ENCODE measurements at regions of chr22 and their contacts with region 1.

Region 1: DNA sequence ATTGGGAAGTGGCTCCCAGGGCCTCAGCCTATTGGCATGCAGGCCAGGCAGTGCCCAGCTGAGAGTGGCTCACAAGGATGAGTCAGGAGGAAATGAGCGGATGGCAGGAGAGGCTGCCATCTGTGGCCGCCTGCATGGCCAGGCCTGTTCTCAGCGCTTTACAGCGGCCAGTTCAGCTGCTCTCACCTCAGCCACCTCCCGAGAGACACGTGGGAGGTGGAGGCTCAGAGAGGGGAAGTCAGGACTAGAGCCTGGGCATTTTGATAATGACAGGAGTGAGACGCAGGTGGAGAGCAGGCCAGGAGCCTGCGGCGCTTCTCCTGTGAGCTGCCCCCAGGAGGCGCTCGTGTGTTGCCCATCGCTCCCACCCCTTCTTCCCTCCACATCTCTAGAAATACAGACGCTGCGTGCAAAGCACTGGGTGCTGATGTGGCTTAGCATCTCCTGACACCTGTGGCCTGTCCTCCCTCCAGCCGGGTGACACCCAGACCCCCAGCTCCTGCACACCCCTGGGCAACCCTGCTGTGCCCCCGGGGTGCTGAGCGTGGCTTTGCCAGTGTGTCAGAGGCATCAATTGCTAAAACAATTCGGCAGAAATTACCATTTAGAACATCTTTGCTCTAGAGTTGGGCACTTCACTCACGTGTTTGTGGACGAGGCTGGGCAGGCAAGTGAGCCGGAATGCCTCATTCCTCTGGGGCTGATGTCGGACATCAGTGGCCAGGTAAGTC is 21.4 kb upstream of the PANX2 start:
- DNase-seq: peak; percentile 61 to 80 (median 70)
- ATAC-seq: peak; percentile 96
- H3K4me3 ChIP-seq: no peak overlapping the region
- H3K4me3 Mint-ChIP-seq: no peak overlapping the region
- H3K27ac ChIP-seq: no peak overlapping the region
- H3K27ac Mint-ChIP-seq: no peak overlapping the region
- H3K4me1 ChIP-seq: no peaks in the 10 kb centered on the region
- H3K4me1 Mint-ChIP-seq: peaks cover 0 to 4% (median 0%) of the 10 kb centered on the region in 7 donors
- H3K27me3 ChIP-seq: no peaks in the 10 kb centered on the region
- H3K27me3 Mint-ChIP-seq: peaks cover 0 to 6% (median 0%) of the 10 kb centered on the region in 5 donors

Region 2: DNA sequence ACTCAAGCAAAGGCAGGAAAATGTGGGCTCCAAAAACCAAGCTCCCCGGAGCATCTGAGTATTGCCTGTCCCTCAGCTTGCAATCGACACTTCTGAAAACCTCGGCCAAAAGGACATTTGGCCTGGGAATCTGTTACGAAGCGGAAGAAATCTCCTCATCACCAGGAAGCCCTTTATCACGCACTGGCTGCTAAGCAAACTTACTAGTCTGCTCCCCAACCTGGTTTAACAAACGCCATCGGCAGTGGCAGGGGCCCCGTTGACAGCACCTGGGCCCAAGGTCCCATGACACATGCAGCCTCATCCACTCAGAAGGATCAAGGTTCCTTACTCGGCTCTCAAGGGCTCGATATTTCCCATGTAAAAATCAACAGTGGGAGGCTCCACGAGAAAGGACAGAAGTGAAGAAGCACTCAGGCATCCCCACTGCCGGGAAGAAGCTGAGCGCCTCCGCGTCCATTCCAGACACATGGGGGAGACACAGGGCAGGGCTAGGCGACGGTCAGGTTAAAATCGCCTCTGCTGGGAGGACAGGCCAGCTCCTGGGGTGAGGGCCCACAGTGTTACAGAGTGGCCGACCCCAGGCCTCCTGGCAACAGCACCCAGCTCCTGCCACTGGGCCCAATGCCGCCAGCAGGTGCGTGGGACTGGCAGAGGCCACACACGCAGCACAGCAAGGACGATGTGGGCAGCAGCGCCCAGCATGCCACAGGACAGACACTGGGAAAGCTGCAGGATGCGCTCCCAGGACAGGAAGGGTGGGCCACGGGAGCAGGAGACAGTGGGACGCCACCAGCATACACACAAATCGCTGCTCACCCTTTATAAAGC is 348.5 kb before region 1 on chr22:
- CTCF ChIA-PET with region 1: no interaction called
- POLR2A ChIA-PET with region 1: no interaction called
- intact Hi-C with region 1: no loop called
- DNase-seq: no peak
- ATAC-seq: no peak
- H3K4me3 ChIP-seq: no peak overlapping the region
- H3K4me3 Mint-ChIP-seq: peak overlapping the region in 2 of 10 donors; percentile 25 to 46
- H3K27ac ChIP-seq: no peak overlapping the region
- H3K27ac Mint-ChIP-seq: peak overlapping the region in 5 of 9 donors; percentile 32 to 84 (median 67)
- H3K4me1 ChIP-seq: peaks cover 6 to 11% of the 10 kb centered on the region in 2 donors
- H3K4me1 Mint-ChIP-seq: peaks cover 13 to 48% (median 32%) of the 10 kb centered on the region in 7 donors
- H3K27me3 ChIP-seq: no peaks in the 10 kb centered on the region
- H3K27me3 Mint-ChIP-seq: no peaks in the 10 kb centered on the region

Region 3: DNA sequence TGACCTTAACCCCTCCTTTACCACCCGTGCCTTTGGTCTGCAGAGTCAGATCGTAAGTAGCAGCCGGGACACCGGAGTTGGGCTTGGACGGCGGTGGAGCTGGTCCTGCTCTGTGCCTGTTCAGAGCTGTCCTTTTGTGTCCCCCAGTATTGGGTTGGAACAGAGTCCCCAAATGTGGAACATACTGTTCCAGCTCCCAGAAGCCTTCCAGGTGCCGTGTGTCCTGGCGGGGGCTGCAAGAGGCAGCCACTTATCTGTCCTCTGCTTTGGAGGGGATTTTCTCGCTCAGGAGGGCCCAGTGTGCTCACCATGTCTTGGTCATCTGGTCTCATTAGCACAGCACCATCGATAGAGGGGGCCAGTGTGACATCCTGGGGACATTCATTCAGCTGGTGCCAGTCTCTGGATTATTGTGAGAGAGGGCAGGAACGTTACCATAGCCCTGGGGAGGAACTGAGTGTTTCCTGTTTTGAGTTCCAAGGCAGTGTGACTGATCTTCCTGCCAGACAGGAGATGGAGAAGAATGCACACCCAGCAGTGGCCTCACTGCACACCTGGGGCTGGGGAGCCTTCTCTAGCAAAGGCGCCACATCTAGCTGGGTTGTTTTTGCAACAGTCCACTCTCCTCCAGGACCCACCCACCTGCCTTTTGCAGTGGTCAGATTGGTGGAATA is 218.3 kb before region 1 on chr22:
- CTCF ChIA-PET with region 1: no interaction called
- POLR2A ChIA-PET with region 1: interaction called, 3 read pairs
- intact Hi-C with region 1: loop called in 1 of 2 experiments (anchors 2 kb)
- DNase-seq: peak in 7 of 9 donors; percentile 37 to 55 (median 44)
- ATAC-seq: peak; percentile 40
- H3K4me3 ChIP-seq: no peak overlapping the region
- H3K4me3 Mint-ChIP-seq: peak overlapping the region; percentile 34 to 83 (median 60)
- H3K27ac ChIP-seq: peak overlapping the region; percentile 37
- H3K27ac Mint-ChIP-seq: peak overlapping the region; percentile 79 to 92 (median 87)
- H3K4me1 ChIP-seq: peaks cover 10 to 28% of the 10 kb centered on the region in 2 donors
- H3K4me1 Mint-ChIP-seq: peaks cover 18 to 47% (median 39%) of the 10 kb centered on the region in 7 donors
- H3K27me3 ChIP-seq: no peaks in the 10 kb centered on the region
- H3K27me3 Mint-ChIP-seq: no peaks in the 10 kb centered on the region

Region 4: GRCh38 chr22:50190941-50191741 is 42.0 kb after region 1 on chr22:
- CTCF ChIA-PET with region 1: interaction called, 14 read pairs
- POLR2A ChIA-PET with region 1: interaction called, 4 read pairs
- intact Hi-C with region 1: loop called (anchors 1 kb)
- DNase-seq: peak in 7 of 9 donors; percentile 80 to 93 (median 90)
- ATAC-seq: peak; percentile 74
- H3K4me3 ChIP-seq: peak overlapping the region; percentile 56
- H3K4me3 Mint-ChIP-seq: peak overlapping the region; percentile 90 to 96 (median 92)
- H3K27ac ChIP-seq: peak overlapping the region; percentile 98
- H3K27ac Mint-ChIP-seq: peak overlapping the region; percentile 94 to 100 (median 99)
- H3K4me1 ChIP-seq: peaks cover 46% of the 10 kb centered on the region in 2 donors
- H3K4me1 Mint-ChIP-seq: peaks cover 25 to 51% (median 33%) of the 10 kb centered on the region in 7 donors
- H3K27me3 ChIP-seq: no peaks in the 10 kb centered on the region
- H3K27me3 Mint-ChIP-seq: no peaks in the 10 kb centered on the region

Region 5: DNA sequence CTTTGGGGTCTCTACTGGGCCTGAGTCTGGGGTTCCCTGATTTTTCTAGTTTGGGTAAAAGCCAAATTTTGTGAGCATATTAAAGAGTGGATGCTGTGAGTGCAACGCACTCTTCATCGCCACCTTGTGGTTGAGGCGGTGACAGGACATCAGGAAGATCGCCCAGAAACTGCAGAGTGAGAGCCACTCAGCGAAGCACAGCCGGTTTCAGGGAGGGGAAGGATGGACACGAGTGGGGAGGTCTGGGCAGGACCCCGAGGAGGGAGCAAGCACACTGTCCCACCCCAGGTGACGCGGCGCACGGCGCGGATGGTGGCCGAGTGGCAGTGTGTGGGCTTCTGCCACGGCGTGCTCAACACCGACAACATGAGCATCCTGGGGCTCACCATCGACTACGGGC is 60.7 kb after region 1 on chr22:
- CTCF ChIA-PET with region 1: interaction called, 13 read pairs
- POLR2A ChIA-PET with region 1: no interaction called
- intact Hi-C with region 1: loop called in 1 of 2 experiments (anchors 1 kb)
- DNase-seq: peak; percentile 50 to 78 (median 68)
- ATAC-seq: peak; percentile 83
- H3K4me3 ChIP-seq: no peak overlapping the region
- H3K4me3 Mint-ChIP-seq: peak overlapping the region in 1 of 10 donors; percentile 25
- H3K27ac ChIP-seq: no peak overlapping the region
- H3K27ac Mint-ChIP-seq: peak overlapping the region in 8 of 9 donors; percentile 58 to 96 (median 82)
- H3K4me1 ChIP-seq: no peaks in the 10 kb centered on the region
- H3K4me1 Mint-ChIP-seq: peaks cover 12 to 39% (median 32%) of the 10 kb centered on the region in 7 donors
- H3K27me3 ChIP-seq: no peaks in the 10 kb centered on the region
- H3K27me3 Mint-ChIP-seq: no peaks in the 10 kb centered on the region

Region 6: DNA sequence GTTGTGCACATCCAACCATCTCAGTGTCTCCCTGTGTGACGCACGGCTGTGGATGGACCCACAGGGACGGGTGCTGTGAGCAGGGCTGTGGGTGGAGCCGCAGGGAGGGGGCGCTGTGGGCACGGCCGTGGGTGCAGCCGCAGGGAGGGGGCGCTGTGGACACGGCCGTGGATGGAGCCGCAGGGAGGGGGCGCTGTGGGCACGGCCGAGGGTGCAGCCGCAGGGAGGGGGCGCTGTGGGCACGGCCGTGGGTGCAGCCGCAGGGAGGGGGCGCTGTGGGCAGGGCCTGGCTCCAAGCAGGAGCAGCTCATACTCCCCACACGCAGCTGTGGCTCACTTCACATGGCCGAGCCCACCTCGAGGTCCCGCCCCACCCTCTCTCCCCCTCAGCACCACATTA is 127.0 kb after region 1 on chr22:
- CTCF ChIA-PET with region 1: no interaction called
- POLR2A ChIA-PET with region 1: no interaction called
- intact Hi-C with region 1: loop called in 1 of 2 experiments (anchors 1 kb)
- DNase-seq: peak in 2 of 9 donors; percentile 22 to 27
- ATAC-seq: peak; percentile 86
- H3K4me3 ChIP-seq: no peak overlapping the region
- H3K4me3 Mint-ChIP-seq: no peak overlapping the region
- H3K27ac ChIP-seq: no peak overlapping the region
- H3K27ac Mint-ChIP-seq: no peak overlapping the region
- H3K4me1 ChIP-seq: peaks cover 3 to 4% of the 10 kb centered on the region in 2 donors
- H3K4me1 Mint-ChIP-seq: peaks cover 0 to 12% (median 5%) of the 10 kb centered on the region in 7 donors
- H3K27me3 ChIP-seq: no peaks in the 10 kb centered on the region
- H3K27me3 Mint-ChIP-seq: peaks cover 0 to 12% (median 0%) of the 10 kb centered on the region in 5 donors

Region 7: DNA sequence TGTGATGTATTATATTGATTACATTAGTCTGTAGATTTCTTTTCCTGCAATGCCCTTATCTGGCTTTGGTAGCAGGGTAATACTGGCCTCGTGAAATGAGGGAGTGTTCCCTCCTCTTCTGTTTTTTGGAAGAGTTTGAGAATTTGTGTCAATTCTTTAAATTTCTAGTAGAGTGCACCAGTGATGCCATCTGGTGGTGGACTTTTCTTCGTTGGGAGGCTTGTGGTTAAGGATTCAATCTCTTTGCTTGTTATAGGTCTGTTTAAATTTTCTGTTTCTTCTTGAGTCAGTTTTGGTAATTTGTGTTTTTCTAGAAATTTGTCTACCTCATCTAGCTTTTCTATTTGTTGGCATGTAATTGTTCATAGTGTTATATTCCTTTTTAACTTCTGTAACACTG is 542.4 kb after region 1 on chr22:
- CTCF ChIA-PET with region 1: no interaction called
- POLR2A ChIA-PET with region 1: no interaction called
- intact Hi-C with region 1: loop called in 1 of 2 experiments (anchors 5 kb)
- DNase-seq: peak in 6 of 9 donors; percentile 16 to 45 (median 34)
- ATAC-seq: no peak
- H3K4me3 ChIP-seq: no peak overlapping the region
- H3K4me3 Mint-ChIP-seq: no peak overlapping the region
- H3K27ac ChIP-seq: no peak overlapping the region
- H3K27ac Mint-ChIP-seq: no peak overlapping the region
- H3K4me1 ChIP-seq: no peaks in the 10 kb centered on the region
- H3K4me1 Mint-ChIP-seq: peaks cover 0 to 7% (median 0%) of the 10 kb centered on the region in 7 donors
- H3K27me3 ChIP-seq: no peaks in the 10 kb centered on the region
- H3K27me3 Mint-ChIP-seq: peaks cover 0 to 23% (median 0%) of the 10 kb centered on the region in 5 donors

Measured in naive thymus-derived CD4-positive, alpha-beta T cell (primary cell).